ENCODE measurements at regions of chr17 and their contacts with region 1.

Region 1: GRCh38 chr17:20315821-20316220 is 151.5 kb downstream of the LGALS9B start:
- DNase-seq: no peak
- ATAC-seq: no peak
- H3K4me3 ChIP-seq: no peak overlapping the region
- H3K4me3 Mint-ChIP-seq: no peak overlapping the region
- H3K27ac ChIP-seq: no peak overlapping the region
- H3K27ac Mint-ChIP-seq: no peak overlapping the region
- H3K4me1 ChIP-seq: peaks cover 8% of the 10 kb centered on the region
- H3K4me1 Mint-ChIP-seq: peaks cover 1 to 2% of the 10 kb centered on the region in 2 donors
- H3K27me3 ChIP-seq: no peaks in the 10 kb centered on the region
- H3K27me3 Mint-ChIP-seq: no peaks in the 10 kb centered on the region
- CTCF ChIP-seq: no peak

Region 2: DNA sequence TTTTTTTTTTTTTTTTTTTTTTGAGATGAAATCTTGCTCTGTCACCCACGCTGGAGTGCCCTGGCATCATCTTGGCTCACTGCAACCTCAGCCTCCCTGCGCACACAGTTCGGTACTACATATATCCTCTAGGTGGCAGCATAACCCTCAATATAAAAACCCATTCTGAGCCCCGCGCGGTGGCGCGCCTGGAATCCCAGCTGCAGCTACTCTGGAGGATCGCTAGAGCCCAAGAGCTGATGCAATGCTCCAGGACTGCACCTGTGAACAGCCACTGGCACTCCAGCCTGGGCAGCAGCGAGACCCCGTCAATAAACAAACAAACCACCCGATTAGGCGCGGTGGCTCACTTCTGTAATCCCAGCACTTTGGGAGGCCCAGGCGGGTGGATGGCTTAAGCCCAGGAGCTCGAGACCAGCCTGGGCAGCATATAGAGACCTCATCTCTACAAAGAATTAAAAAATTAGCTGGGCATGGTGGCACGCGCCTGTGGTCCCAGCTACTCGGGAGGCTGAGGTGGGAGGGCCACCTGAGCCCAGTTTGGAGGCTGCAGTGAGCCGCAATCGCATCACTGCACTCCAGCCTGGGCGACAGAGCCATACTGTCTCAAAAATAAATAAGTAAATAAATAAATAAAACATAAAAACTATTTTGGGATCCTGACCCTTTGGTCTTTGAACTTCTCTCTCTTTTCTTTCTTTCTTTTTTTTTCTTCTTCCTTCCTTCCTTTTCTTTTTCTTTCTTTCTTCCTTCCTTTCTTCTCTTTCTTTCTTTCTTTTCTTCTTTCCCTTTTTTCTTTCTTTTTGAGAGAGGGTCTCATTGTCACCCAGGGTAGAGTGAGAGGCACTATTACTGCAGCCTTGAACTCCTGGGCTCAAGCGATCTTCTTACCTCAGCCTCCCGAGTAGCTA is 322.8 kb before region 1 on chr17:
- intact Hi-C with region 1: loop called (anchors 2 kb)
- DNase-seq: peak; percentile 63 to 89
- ATAC-seq: peak; percentile 96 to 100 (median 99)
- H3K4me3 ChIP-seq: no peak overlapping the region
- H3K4me3 Mint-ChIP-seq: no peak overlapping the region
- H3K27ac ChIP-seq: no peak overlapping the region
- H3K27ac Mint-ChIP-seq: no peak overlapping the region
- H3K4me1 ChIP-seq: peaks cover 5% of the 10 kb centered on the region
- H3K4me1 Mint-ChIP-seq: no peaks in the 10 kb centered on the region
- H3K27me3 ChIP-seq: no peaks in the 10 kb centered on the region
- H3K27me3 Mint-ChIP-seq: peaks cover 14 to 16% of the 10 kb centered on the region in 2 donors
- CTCF ChIP-seq: peak; percentile 81

Region 3: DNA sequence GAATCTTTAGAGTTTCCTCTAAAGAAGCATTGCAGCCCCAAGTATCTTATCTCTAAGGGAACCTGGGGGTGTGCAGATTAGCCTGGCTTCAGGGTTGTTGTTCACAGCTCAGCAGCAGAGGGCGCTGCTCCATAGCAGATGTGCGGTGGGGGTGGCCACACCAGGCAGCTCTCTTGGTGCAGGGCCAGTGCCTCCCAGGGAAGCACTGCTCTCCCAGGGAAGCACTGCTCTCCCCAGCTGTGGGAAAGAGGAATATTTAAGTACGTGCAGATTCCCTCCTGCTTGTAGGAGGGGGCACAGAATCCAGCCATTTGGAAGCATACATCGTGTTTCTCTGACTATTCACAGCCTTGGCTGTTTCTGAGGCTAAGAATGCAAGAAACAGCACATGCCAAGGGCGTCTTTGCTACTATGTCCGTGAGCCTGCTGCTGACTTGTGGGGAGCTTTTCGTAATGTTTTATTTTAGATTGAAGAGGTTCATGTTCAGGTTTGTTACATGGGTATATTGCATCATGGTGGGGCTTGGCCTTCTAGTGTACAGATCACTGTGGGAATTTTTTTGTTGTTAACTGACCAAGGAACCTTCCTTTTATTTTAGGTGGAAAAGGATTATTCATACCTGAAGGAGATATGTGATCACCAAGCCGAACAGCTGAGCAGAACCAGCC is 88.9 kb before region 1 on chr17:
- intact Hi-C with region 1: loop called (anchors 2 kb)
- DNase-seq: peak; percentile 63 to 88
- ATAC-seq: peak; percentile 87 to 99 (median 96)
- H3K4me3 ChIP-seq: no peak overlapping the region
- H3K4me3 Mint-ChIP-seq: no peak overlapping the region
- H3K27ac ChIP-seq: no peak overlapping the region
- H3K27ac Mint-ChIP-seq: no peak overlapping the region
- H3K4me1 ChIP-seq: no peaks in the 10 kb centered on the region
- H3K4me1 Mint-ChIP-seq: peaks cover 4% of the 10 kb centered on the region in 2 donors
- H3K27me3 ChIP-seq: no peaks in the 10 kb centered on the region
- H3K27me3 Mint-ChIP-seq: no peaks in the 10 kb centered on the region
- CTCF ChIP-seq: peak; percentile 88

Region 4: DNA sequence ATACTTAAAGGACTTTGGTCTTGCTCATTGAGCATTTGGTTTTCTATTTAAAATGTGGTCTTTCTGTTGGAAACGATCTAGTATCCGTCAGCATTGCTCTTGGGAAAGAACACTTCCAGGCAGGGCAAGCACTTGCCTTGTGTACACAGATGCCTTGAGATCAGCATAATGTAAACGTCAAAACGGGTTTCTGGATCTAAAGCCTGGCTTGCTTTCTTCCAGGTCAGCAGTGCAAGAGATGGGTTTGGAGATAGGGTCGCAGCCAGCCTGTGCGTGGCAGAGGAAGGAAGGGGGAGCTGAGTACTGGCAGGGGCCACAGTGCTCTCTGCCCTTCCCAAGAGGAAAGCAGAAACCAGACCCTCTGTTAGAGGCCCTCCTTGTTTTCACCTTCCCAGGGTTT is 24.0 kb before region 1 on chr17:
- intact Hi-C with region 1: no loop called
- DNase-seq: no peak
- ATAC-seq: no peak
- H3K4me3 ChIP-seq: no peak overlapping the region
- H3K4me3 Mint-ChIP-seq: no peak overlapping the region
- H3K27ac ChIP-seq: no peak overlapping the region
- H3K27ac Mint-ChIP-seq: no peak overlapping the region
- H3K4me1 ChIP-seq: no peaks in the 10 kb centered on the region
- H3K4me1 Mint-ChIP-seq: no peaks in the 10 kb centered on the region
- H3K27me3 ChIP-seq: no peaks in the 10 kb centered on the region
- H3K27me3 Mint-ChIP-seq: no peaks in the 10 kb centered on the region
- CTCF ChIP-seq: no peak

Measured in natural killer cell (primary cell).